Lower leg skin (tissue), 4 donors: ENCODE measurements at regions of chr1 and their contacts with region 1.

Region 1: DNA sequence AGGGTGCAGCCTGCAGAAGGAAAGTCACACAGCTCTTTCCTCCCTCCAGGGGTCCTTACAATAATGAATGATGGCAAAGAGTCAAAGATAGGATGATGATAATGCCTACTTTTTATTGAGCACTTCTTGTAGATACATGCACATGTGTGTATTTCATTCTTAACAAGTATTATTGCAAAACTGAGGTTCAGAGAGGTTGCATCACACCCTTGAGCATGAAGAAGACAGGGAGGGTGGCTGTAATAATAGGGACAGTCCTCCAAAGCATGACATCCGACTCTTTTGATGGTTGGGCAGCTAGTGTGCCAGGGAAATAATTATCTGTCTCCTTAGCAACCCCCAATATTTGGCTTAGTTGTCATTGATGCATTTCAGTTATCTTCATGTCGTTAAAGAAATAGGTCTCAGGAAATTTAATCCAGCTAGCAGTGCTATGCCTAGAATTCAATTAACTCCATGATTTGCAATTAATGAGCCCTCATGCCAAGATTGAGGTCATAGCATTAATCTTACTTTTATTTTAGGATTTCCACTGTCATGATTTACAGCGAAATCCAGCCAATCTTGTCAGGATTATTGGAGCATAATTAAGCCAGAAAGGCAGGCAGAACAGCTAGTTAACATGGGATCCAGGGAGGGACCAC is 35.0 kb downstream of the DNAJC6 start:
- DNase-seq: no peak
- H3K4me3 ChIP-seq: no peak overlapping the region
- CTCF ChIP-seq: no peak
- POLR2A ChIP-seq: no peak

Region 2: GRCh38 chr1:65323246-65323645 is 21.0 kb before region 1 on chr1:
- intact Hi-C with region 1: loop called (anchors 2 kb)
- DNase-seq: no peak
- H3K4me3 ChIP-seq: no peak overlapping the region
- CTCF ChIP-seq: no peak
- POLR2A ChIP-seq: no peak